A549 (cell line): ENCODE measurements at regions of chr7 and their contacts with region 1.

Region 1: GRCh38 chr7:66905689-66906088 is 15.3 kb upstream of the TMEM248 start:
- DNase-seq: no peak
- ATAC-seq: peak in 1 of 2 experiments; percentile 67; a peak in 3 of 6 replicates
- H3K4me3 ChIP-seq: no peak overlapping the region
- H3K27ac ChIP-seq: no peak overlapping the region
- H3K4me1 ChIP-seq: no peaks in the 10 kb centered on the region
- CTCF ChIP-seq: no peak
- EP300 ChIP-seq: no peak
- POLR2A ChIP-seq: no peak
- RAD21 ChIP-seq: peak in 1 of 2 experiments; percentile 18; a peak in 1 of 5 replicates

Region 2: GRCh38 chr7:66894463-66895080 is 11.1 kb before region 1 on chr7:
- CTCF ChIA-PET with region 1: interaction called, 23 read pairs
- POLR2A ChIA-PET with region 1: no interaction called
- DNase-seq: no peak
- ATAC-seq: 0 out of 6 replicates have a peak, but pooled peaks of 1 of the 2 experiments have one; percentile 34
- H3K4me3 ChIP-seq: no peak overlapping the region
- H3K27ac ChIP-seq: no peak overlapping the region
- H3K4me1 ChIP-seq: no peaks in the 10 kb centered on the region
- CTCF ChIP-seq: no peak
- EP300 ChIP-seq: no peak
- POLR2A ChIP-seq: no peak
- RAD21 ChIP-seq: peak in 1 of 2 experiments; percentile 23; a peak in 1 of 5 replicates

Region 3: DNA sequence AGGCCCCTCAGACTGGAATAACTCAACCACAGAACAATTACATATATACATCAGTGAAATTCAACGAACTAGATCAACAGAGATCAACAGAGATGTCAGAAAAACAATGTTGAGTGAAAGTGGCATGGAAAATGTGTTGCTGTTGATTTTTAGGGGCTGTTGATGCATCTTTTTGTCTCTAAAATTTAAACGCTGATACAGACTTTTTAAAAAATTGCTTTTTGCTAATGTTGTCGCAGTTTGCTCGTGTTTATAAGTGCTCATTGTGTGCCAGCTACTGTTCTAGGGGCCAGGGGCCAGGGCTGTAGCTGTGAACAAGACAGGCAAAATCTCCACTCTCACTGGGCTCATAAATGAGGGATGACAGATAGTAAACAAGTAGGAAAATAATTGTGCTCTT is 33.6 kb after region 1 on chr7:
- CTCF ChIA-PET with region 1: no interaction called
- POLR2A ChIA-PET with region 1: no interaction called
- DNase-seq: no peak
- ATAC-seq: no peak
- H3K4me3 ChIP-seq: no peak overlapping the region
- H3K27ac ChIP-seq: no peak overlapping the region
- H3K4me1 ChIP-seq: no peaks in the 10 kb centered on the region
- CTCF ChIP-seq: no peak
- EP300 ChIP-seq: no peak
- POLR2A ChIP-seq: no peak
- RAD21 ChIP-seq: no peak